Panc1 (cell line): ENCODE measurements at regions of chr6 and their contacts with region 1.

Region 1: DNA sequence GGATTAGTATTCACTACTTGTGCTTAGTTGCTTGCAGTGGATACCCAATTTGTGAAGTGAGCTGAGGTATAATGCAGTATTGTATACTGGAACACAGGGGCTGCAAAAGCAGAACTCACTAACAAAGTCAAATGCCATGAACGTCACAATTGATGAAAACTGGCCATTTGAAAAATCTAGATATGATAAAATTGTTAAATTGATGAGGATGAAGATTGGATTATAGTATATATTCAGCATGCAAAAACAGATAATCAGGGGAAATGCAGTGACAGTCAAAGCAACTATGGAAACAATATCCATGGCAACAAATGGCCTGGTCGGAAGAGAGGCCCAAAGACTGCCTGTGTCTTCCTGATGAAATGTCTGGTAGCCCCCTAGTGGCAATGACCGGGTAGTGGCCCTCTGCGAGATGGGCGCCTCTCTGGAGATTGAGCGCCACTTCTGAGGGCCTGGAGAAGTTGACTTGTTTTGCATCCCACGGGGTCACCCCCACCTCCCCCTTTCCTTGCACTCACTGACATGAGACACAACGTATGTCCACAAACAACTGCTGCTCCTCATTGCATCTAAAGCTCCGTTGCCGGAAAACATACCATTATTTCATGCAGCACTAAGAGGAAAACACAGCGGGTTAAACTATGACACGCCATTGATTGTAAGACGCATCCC is 43.6 kb downstream of the C6orf15 start:
- DNase-seq: no peak
- ATAC-seq: peak; percentile 94
- H3K4me3 ChIP-seq: no peak overlapping the region
- H3K27ac ChIP-seq: no peak overlapping the region
- H3K4me1 ChIP-seq: peaks cover 3% of the 10 kb centered on the region
- H3K27me3 ChIP-seq: no peaks in the 10 kb centered on the region
- CTCF ChIP-seq: peak; percentile 94

Region 2: DNA sequence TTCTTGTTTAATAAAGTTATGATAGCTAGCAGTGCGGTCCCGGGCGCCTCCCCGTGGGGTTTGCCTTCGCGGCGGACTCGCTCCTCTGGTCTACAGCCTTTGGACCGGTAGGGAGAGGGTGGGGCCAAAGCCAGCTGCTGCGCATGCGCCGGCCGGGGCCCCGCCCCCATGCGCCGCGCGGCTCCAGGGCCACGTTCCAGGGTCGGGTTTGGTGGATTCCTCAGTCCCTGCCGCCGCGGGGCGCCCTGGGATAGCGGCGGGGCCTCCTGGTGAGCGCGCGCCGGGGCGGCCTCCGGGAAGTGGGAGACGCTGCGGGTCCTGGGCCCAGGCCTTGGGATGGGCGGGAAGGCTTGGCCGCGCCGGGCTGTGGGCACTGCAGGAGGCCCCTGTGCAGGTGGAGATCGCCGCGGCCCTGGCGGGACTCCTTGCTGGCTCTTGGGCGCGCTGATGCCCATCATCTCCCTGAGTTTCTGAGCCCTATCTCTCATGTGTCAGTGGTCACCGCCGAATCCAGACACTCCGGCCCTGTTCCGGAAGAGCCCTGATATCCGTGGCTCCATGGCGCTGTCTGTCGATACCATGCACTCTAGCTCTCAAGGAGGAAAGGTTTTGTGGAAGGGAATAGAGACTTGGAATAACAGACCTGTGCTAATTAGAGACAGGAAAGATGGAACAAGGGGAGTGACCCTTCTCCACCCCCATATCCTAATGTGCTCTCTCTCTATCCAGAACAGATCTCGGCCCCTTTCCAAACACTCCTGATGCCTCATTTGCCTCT is 154.5 kb before region 1 on chr6 and contains the start of gene VARS2:
- CTCF ChIA-PET with region 1: interaction called, 15 read pairs
- POLR2A ChIA-PET with region 1: no interaction called
- in situ Hi-C with region 1: no loop called
- intact Hi-C with region 1: loop called (anchors 2 kb)
- DNase-seq: peak; percentile 64
- ATAC-seq: peak; percentile 97
- H3K4me3 ChIP-seq: peak within 1 kb of the TSS; percentile 66 to 89
- H3K27ac ChIP-seq: peak within 1 kb of the TSS; percentile 92
- H3K4me1 ChIP-seq: peaks cover 14% of the 10 kb centered on the region
- H3K27me3 ChIP-seq: no peaks in the 10 kb centered on the region
- CTCF ChIP-seq: peak; percentile 30; the same call in 1 of the 2 replicates
- total RNA-seq, gene VARS2: 42.7 TPM

Region 3: GRCh38 chr6:30931969-30932645 is 136.7 kb before region 1 on chr6 and contains the start of gene SFTA2:
- CTCF ChIA-PET with region 1: no interaction called
- POLR2A ChIA-PET with region 1: no interaction called
- in situ Hi-C with region 1: no loop called
- intact Hi-C with region 1: loop called (anchors 5 kb)
- DNase-seq: no peak
- ATAC-seq: no peak
- H3K4me3 ChIP-seq: no peak within 1 kb of the TSS
- H3K27ac ChIP-seq: no peak within 1 kb of the TSS
- H3K4me1 ChIP-seq: no peaks in the 10 kb centered on the region
- H3K27me3 ChIP-seq: no peaks in the 10 kb centered on the region
- CTCF ChIP-seq: no peak
- total RNA-seq, gene SFTA2: not detected

Region 4: GRCh38 chr6:30990422-30991086 is 78.3 kb before region 1 on chr6:
- CTCF ChIA-PET with region 1: no interaction called
- POLR2A ChIA-PET with region 1: no interaction called
- in situ Hi-C with region 1: no loop called
- intact Hi-C with region 1: no loop called
- DNase-seq: no peak
- ATAC-seq: peak; percentile 45; the same call in 1 of the 2 replicates
- H3K4me3 ChIP-seq: peak overlapping the region in 1 of 2 experiments; percentile 5; a peak in 1 of 4 replicates
- H3K27ac ChIP-seq: no peak overlapping the region
- H3K4me1 ChIP-seq: no peaks in the 10 kb centered on the region; the same call in 1 of the 2 replicates
- H3K27me3 ChIP-seq: no peaks in the 10 kb centered on the region
- CTCF ChIP-seq: no peak

Region 5: DNA sequence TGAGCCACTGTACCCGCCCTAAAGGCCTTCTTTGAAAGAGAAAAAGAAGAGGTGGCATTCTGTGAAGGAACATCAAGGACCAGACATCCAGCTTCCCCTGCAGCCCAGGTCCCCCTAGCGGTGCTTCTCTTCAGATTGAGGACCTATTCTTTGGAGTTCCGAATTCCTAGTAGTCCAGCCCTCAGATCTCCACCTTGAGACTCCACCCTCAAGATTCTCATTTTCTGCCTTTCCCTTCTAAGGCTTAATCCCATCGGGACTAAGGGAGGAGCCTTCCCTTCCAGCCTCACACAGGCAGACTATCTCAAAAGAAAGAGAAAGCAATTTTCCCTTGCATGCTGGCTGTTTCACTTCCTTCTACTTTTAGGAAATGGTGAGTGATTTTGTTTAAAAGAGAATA is 26.0 kb before region 1 on chr6:
- CTCF ChIA-PET with region 1: no interaction called
- POLR2A ChIA-PET with region 1: no interaction called
- in situ Hi-C with region 1: no loop called
- intact Hi-C with region 1: no loop called
- DNase-seq: peak; percentile 18
- ATAC-seq: peak; percentile 89
- H3K4me3 ChIP-seq: no peak overlapping the region
- H3K27ac ChIP-seq: no peak overlapping the region
- H3K4me1 ChIP-seq: peaks cover 4% of the 10 kb centered on the region
- H3K27me3 ChIP-seq: no peaks in the 10 kb centered on the region
- CTCF ChIP-seq: peak; percentile 84

Region 6: DNA sequence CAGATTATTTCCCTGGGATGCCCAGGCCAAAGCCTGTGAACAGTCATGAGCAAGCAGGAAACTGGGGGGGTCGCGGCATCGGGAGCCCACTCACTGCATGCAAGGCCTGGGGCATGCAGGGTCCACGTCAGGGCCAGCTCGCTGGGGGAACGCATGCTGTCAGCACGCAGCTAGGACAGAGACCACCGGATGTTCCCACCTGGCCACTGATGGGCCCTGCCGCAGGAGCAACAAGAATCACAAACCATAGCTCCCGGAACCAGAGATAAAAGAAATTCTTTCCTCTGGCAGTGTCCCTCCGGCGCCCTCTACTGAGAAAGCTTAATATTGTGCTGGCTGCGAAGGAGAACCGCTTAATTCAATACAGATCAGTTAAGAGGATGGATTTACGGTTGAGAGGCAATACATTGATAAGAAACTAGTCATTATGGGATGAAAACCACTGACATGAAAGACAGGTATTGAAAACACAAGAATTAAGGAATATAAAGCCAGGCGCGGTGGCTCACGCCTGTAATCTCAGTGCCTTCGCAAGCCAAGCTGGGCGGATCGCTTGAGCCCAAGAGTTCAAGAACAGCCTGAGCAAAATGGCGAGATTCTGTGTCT is 11.0 kb after region 1 on chr6:
- CTCF ChIA-PET with region 1: interaction called, 11 read pairs
- POLR2A ChIA-PET with region 1: interaction called, 11 read pairs
- in situ Hi-C with region 1: no loop called
- intact Hi-C with region 1: no loop called
- DNase-seq: no peak
- ATAC-seq: peak; percentile 91
- H3K4me3 ChIP-seq: 0 out of 4 replicates have a peak overlapping the region, but pooled peaks of 1 of the 2 experiments have one; percentile 23
- H3K27ac ChIP-seq: no peak overlapping the region
- H3K4me1 ChIP-seq: no peaks in the 10 kb centered on the region
- H3K27me3 ChIP-seq: no peaks in the 10 kb centered on the region
- CTCF ChIP-seq: peak; percentile 97